A549 (cell line): ENCODE measurements at regions of chr19 and their contacts with region 1.

Region 1: GRCh38 chr19:49210108-49210900 is 52.7 kb downstream of the TRPM4 start:
- DNase-seq: peak in 1 of 2 experiments; percentile 69
- ATAC-seq: peak; percentile 27 to 57; a peak in 3 of 6 replicates
- H3K4me3 ChIP-seq: no peak overlapping the region
- H3K27ac ChIP-seq: no peak overlapping the region
- H3K4me1 ChIP-seq: 0 out of 3 replicates have a peak, but pooled peaks cover 3% of the 10 kb centered on the region
- CTCF ChIP-seq: no peak
- EP300 ChIP-seq: no peak
- POLR2A ChIP-seq: no peak
- RAD21 ChIP-seq: no peak

Region 2: GRCh38 chr19:48999481-49000325 is 210.6 kb before region 1 on chr19:
- CTCF ChIA-PET with region 1: interaction called, 12 read pairs
- POLR2A ChIA-PET with region 1: no interaction called
- DNase-seq: peak; percentile 81 to 85
- ATAC-seq: peak; percentile 84 to 89
- H3K4me3 ChIP-seq: no peak overlapping the region
- H3K27ac ChIP-seq: no peak overlapping the region
- H3K4me1 ChIP-seq: peaks cover 9% of the 10 kb centered on the region; the same call in 2 of the 3 replicates
- CTCF ChIP-seq: peak; percentile 82
- EP300 ChIP-seq: no peak
- POLR2A ChIP-seq: no peak
- RAD21 ChIP-seq: peak; percentile 69

Region 3: DNA sequence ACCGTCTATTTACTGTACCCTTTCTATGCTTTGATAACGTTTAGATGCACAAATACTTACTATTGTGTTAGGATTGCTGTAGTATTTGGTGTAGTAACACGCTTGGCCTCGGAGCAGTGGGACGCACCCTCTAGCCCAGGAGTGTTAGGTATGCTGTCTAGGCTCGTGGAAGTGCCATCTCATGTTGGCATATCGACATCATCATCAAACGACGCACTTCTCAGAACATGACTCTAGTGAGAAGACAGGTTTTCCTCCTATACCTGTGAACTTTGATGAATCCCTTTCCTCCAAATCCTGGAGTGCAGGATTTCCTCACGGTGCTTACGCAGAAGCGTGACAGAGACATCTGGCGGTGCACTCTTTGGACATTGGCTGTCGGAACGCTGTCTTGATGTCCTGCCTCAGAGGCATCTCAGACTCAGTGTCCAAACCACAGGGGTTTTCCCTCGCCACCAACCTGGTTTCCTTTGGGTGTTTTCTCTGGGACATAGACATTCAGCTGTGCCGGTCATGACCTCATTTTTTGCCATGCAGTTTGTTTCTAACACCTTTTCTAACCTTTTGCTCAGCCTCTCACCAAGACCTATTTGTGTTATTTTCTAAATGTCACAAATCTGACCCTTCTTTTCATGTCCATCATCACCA is 118.8 kb before region 1 on chr19:
- CTCF ChIA-PET with region 1: interaction called, 13 read pairs
- POLR2A ChIA-PET with region 1: no interaction called
- DNase-seq: no peak
- ATAC-seq: no peak
- H3K4me3 ChIP-seq: no peak overlapping the region
- H3K27ac ChIP-seq: no peak overlapping the region
- H3K4me1 ChIP-seq: peaks cover 13% of the 10 kb centered on the region; the same call in 2 of the 3 replicates
- CTCF ChIP-seq: no peak
- EP300 ChIP-seq: no peak
- POLR2A ChIP-seq: no peak
- RAD21 ChIP-seq: no peak

Region 4: GRCh38 chr19:49118565-49119410 is 91.5 kb before region 1 on chr19 and contains the start of gene C19orf73:
- CTCF ChIA-PET with region 1: interaction called, 14 read pairs
- POLR2A ChIA-PET with region 1: no interaction called
- DNase-seq: peak; percentile 94 to 98
- ATAC-seq: peak; percentile 65 to 87
- H3K4me3 ChIP-seq: peak within 1 kb of the TSS; percentile 62
- H3K27ac ChIP-seq: peak within 1 kb of the TSS; percentile 95
- H3K4me1 ChIP-seq: peaks cover 20% of the 10 kb centered on the region
- CTCF ChIP-seq: no peak
- EP300 ChIP-seq: no peak
- POLR2A ChIP-seq: peak; percentile 64
- RAD21 ChIP-seq: no peak
- polyA plus RNA-seq, gene C19orf73: 1.4 and 1.8 TPM in 2 replicates

Region 5: GRCh38 chr19:49165111-49165750 is 45.1 kb before region 1 on chr19:
- CTCF ChIA-PET with region 1: interaction called, 11 read pairs
- POLR2A ChIA-PET with region 1: no interaction called
- DNase-seq: no peak
- ATAC-seq: no peak; a peak in 1 of 6 replicates
- H3K4me3 ChIP-seq: no peak overlapping the region
- H3K27ac ChIP-seq: no peak overlapping the region
- H3K4me1 ChIP-seq: peaks cover 5% of the 10 kb centered on the region; the same call in 2 of the 3 replicates
- CTCF ChIP-seq: no peak
- EP300 ChIP-seq: no peak
- POLR2A ChIP-seq: no peak
- RAD21 ChIP-seq: no peak